ENCODE measurements at regions of chr6 and their contacts with region 1.

Region 1: DNA sequence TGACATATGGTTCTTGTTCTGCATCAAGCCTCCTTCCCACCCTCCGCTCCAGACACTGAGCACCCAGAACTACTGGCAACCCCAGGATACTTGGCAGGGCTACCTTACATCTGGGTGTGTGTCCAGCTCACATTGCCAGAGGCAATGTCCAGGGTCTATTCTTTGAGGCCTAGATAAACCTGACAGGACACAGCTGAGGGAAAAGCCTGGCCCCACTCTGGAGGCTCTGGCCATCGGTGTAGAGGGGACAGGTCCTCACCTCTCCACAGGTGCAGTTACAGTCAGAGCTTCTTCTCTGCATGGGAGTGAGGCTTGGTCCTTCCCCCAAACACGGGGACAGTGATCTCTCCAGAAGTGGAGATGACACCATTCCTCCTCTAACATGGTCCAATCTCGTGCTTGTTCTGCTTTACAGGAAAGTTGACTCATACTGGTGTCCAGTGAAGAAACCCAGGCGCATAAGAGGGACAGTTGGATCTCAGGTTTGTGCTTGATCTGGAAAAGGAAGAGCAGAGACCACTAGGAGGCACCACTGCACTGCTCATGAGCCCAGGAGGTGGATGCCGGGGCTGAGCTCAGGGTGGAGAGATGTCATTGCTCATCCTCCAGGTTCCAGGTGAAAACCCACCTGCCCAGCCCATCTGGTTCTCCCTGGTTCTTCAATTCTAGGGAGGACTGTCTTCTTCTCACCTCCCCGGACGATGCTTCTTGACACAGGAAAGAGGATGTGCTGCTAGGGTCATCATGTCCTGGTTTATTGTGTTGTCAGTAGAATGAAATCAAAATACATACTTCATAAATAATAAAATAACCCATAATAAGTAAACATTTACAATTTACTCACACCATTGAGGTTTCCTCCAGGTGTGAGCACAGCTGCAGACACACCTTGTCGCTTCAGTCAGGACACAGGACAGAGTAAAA is 14.7 kb downstream of the HLA-F start:
- DNase-seq: peak; percentile 82
- ATAC-seq: peak; percentile 85
- H3K4me3 ChIP-seq: no peak overlapping the region
- H3K4me3 Mint-ChIP-seq: no peak overlapping the region
- H3K27ac ChIP-seq: no peak overlapping the region
- H3K27ac Mint-ChIP-seq: no peak overlapping the region
- H3K4me1 ChIP-seq: peaks cover 0 to 5% of the 10 kb centered on the region in 2 donors
- H3K4me1 Mint-ChIP-seq: peaks cover 12% of the 10 kb centered on the region
- H3K27me3 ChIP-seq: no peaks in the 10 kb centered on the region
- H3K27me3 Mint-ChIP-seq: no peaks in the 10 kb centered on the region
- CTCF ChIP-seq: peak; percentile 82

Region 2: GRCh38 chr6:29531431-29532067 is 206.4 kb before region 1 on chr6:
- CTCF ChIA-PET with region 1: no interaction called
- POLR2A ChIA-PET with region 1: interaction called, 12 read pairs
- intact Hi-C with region 1: no loop called
- DNase-seq: no peak
- ATAC-seq: no peak
- H3K4me3 ChIP-seq: no peak overlapping the region
- H3K4me3 Mint-ChIP-seq: no peak overlapping the region
- H3K27ac ChIP-seq: no peak overlapping the region
- H3K27ac Mint-ChIP-seq: no peak overlapping the region
- H3K4me1 ChIP-seq: no peaks in the 10 kb centered on the region
- H3K4me1 Mint-ChIP-seq: no peaks in the 10 kb centered on the region
- H3K27me3 ChIP-seq: peaks cover 0 to 3% (median 0%) of the 10 kb centered on the region in 4 experiments
- H3K27me3 Mint-ChIP-seq: peaks cover 16% of the 10 kb centered on the region
- CTCF ChIP-seq: no peak

Region 3: DNA sequence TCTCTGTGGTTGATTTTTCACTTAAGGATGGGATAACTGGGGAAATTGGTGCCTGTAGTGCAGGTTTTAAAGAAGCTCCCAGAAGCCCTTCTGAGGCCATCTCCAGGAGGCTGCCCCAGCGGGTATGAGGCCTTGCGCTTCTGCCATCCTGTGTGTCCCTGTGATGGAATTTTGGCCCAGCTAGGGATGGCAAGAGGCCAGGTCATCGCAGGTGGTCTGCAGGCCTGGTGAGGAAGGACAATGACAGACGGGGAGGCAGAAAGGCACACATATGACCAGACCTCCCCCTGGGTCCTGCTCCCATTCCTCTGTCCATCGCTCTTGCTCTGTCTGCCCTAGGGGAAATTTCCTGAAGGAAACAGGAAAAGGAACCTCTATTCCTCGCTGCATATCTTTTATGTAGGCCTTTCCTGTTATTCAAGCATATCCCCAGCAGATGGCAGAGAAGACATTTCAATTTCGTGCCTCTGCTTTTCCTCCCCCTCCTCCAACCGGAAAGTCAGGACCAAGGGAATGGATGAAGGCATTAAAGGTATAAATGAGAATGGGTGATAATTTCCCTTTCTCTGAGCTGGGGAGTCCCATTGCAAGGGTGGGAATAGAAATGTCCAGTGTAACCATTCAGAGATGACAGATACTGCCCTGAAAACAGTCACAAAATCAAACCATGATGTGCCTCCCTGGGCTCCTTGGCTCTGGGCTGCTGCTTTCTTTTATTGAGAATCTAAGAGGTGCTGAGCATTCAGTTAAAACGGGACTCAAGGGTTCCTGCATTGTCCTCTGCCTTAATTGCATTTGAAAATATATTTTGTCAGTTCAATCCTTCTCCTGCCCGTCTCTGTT is 32.4 kb before region 1 on chr6:
- CTCF ChIA-PET with region 1: interaction called, 10 read pairs
- POLR2A ChIA-PET with region 1: no interaction called
- intact Hi-C with region 1: no loop called
- DNase-seq: peak; percentile 64
- ATAC-seq: no peak
- H3K4me3 ChIP-seq: no peak overlapping the region
- H3K4me3 Mint-ChIP-seq: no peak overlapping the region
- H3K27ac ChIP-seq: no peak overlapping the region
- H3K27ac Mint-ChIP-seq: no peak overlapping the region
- H3K4me1 ChIP-seq: peaks cover 18 to 39% of the 10 kb centered on the region in 2 donors
- H3K4me1 Mint-ChIP-seq: peaks cover 21% of the 10 kb centered on the region
- H3K27me3 ChIP-seq: peaks cover 0 to 17% (median 7%) of the 10 kb centered on the region in 4 experiments
- H3K27me3 Mint-ChIP-seq: peaks cover 35% of the 10 kb centered on the region
- CTCF ChIP-seq: peak; percentile 72

Region 4: GRCh38 chr6:29723262-29723665 is 14.7 kb before region 1 on chr6 and contains the start of gene HLA-F:
- CTCF ChIA-PET with region 1: interaction called, 41 read pairs
- POLR2A ChIA-PET with region 1: interaction called, 8 read pairs
- intact Hi-C with region 1: no loop called
- DNase-seq: peak; percentile 96
- ATAC-seq: peak; percentile 91
- H3K4me3 ChIP-seq: peak within 1 kb of the TSS; percentile 75 to 100 (median 100)
- H3K4me3 Mint-ChIP-seq: peak within 1 kb of the TSS; percentile 96
- H3K27ac ChIP-seq: peak within 1 kb of the TSS; percentile 99 to 100
- H3K27ac Mint-ChIP-seq: peak within 1 kb of the TSS; percentile 98
- H3K4me1 ChIP-seq: peaks cover 29 to 43% of the 10 kb centered on the region in 2 donors
- H3K4me1 Mint-ChIP-seq: peaks cover 55% of the 10 kb centered on the region
- H3K27me3 ChIP-seq: no peaks in the 10 kb centered on the region
- H3K27me3 Mint-ChIP-seq: no peaks in the 10 kb centered on the region
- CTCF ChIP-seq: no peak
- total RNA-seq, gene HLA-F: 895 and 911 TPM in 2 replicates

Region 5: DNA sequence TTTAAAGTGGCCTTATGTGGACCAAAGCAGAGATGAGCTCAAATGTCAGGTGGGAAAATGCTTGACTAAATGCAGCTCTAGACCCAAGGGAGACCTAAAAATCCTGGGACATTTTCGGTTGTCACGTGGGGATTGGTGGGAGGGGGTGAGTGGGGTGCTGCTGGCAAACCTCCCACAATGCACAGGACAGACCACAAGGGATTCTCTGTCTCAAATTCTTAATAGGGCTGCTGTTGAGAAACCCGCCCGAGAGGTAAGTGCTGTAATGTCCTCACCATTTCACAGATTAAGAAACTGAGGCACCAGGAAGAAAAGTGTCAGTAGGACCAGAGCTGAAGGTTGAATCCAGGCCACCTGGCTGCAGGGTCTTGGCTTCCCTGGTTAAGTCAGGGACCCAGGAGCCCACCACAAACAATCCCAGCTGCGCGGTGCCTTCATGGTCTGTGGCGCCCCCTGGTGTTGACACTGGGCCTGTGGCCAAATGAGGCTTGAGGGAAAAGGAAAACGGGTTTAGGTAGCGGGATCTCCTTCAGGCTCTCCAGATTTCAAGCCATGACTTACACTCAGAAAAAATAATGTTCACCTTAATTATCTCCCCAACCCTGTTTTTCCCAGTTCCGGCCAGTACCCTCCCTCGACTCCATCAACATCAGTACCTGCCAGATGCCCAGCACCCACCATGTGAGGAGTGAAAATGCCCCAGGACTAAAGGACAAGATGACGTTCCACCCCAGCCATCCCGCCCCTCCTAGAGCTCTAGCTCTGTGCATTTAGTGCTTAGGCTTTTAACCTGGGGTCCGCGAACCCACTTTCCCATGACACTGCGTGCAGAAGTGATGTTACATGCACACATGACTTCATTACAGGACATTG is 96.8 kb after region 1 on chr6:
- CTCF ChIA-PET with region 1: interaction called, 88 read pairs
- POLR2A ChIA-PET with region 1: no interaction called
- intact Hi-C with region 1: no loop called
- DNase-seq: peak; percentile 69
- ATAC-seq: no peak
- H3K4me3 ChIP-seq: no peak overlapping the region
- H3K4me3 Mint-ChIP-seq: no peak overlapping the region
- H3K27ac ChIP-seq: no peak overlapping the region
- H3K27ac Mint-ChIP-seq: no peak overlapping the region
- H3K4me1 ChIP-seq: no peaks in the 10 kb centered on the region
- H3K4me1 Mint-ChIP-seq: no peaks in the 10 kb centered on the region
- H3K27me3 ChIP-seq: peaks cover 0 to 43% (median 19%) of the 10 kb centered on the region in 4 experiments
- H3K27me3 Mint-ChIP-seq: peaks cover 74% of the 10 kb centered on the region
- CTCF ChIP-seq: peak; percentile 89

Region 6: DNA sequence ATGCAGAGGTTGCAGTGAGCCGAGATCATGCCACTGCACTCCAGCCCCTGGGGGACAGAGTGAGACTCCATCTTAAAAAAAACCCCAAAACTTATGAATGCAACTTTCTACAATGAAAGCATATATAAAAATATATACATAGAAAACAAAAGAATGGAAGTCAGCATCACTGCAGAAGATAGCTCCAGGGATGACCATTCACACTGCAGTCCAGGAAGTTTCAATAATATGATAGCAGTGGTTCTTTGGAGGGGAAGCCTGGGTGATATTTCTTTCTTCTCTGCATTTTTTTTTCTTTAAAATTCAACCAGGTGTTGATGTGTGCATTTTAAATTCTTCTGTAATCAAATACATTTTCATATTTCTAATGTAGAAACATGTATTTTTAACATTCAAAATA is 101.9 kb after region 1 on chr6:
- CTCF ChIA-PET with region 1: interaction called, 88 read pairs
- POLR2A ChIA-PET with region 1: no interaction called
- intact Hi-C with region 1: no loop called
- DNase-seq: no peak
- ATAC-seq: no peak
- H3K4me3 ChIP-seq: no peak overlapping the region
- H3K4me3 Mint-ChIP-seq: no peak overlapping the region
- H3K27ac ChIP-seq: no peak overlapping the region
- H3K27ac Mint-ChIP-seq: no peak overlapping the region
- H3K4me1 ChIP-seq: no peaks in the 10 kb centered on the region
- H3K4me1 Mint-ChIP-seq: no peaks in the 10 kb centered on the region
- H3K27me3 ChIP-seq: peaks cover 0 to 37% (median 26%) of the 10 kb centered on the region in 4 experiments
- H3K27me3 Mint-ChIP-seq: peaks cover 60% of the 10 kb centered on the region
- CTCF ChIP-seq: no peak

Region 7: GRCh38 chr6:30013291-30013922 is 275.4 kb after region 1 on chr6:
- CTCF ChIA-PET with region 1: interaction called, 22 read pairs
- POLR2A ChIA-PET with region 1: no interaction called
- intact Hi-C with region 1: no loop called
- DNase-seq: peak; percentile 63
- ATAC-seq: peak; percentile 43
- H3K4me3 ChIP-seq: no peak overlapping the region
- H3K4me3 Mint-ChIP-seq: no peak overlapping the region
- H3K27ac ChIP-seq: no peak overlapping the region
- H3K27ac Mint-ChIP-seq: no peak overlapping the region
- H3K4me1 ChIP-seq: peaks cover 0 to 2% of the 10 kb centered on the region in 2 donors
- H3K4me1 Mint-ChIP-seq: no peaks in the 10 kb centered on the region
- H3K27me3 ChIP-seq: peaks cover 0 to 4% (median 0%) of the 10 kb centered on the region in 4 experiments
- H3K27me3 Mint-ChIP-seq: peaks cover 3% of the 10 kb centered on the region
- CTCF ChIP-seq: peak; percentile 79

Measured in B cell (primary cell).